CD4-positive, alpha-beta memory T cell (primary cell): ENCODE measurements at regions of chr14 and their contacts with region 1.

Region 1: GRCh38 chr14:54347997-54348611 is 48.7 kb upstream of the CDKN3 start:
- DNase-seq: peak in 4 of 5 donors; percentile 8 to 20 (median 10)
- H3K4me3 ChIP-seq: no peak overlapping the region
- H3K4me3 Mint-ChIP-seq: no peak overlapping the region
- H3K27ac ChIP-seq: no peak overlapping the region
- H3K27ac Mint-ChIP-seq: no peak overlapping the region
- H3K4me1 ChIP-seq: no peaks in the 10 kb centered on the region
- H3K4me1 Mint-ChIP-seq: peaks cover 0 to 5% (median 3%) of the 10 kb centered on the region in 4 donors
- H3K27me3 ChIP-seq: no peaks in the 10 kb centered on the region
- H3K27me3 Mint-ChIP-seq: peaks cover 7 to 15% of the 10 kb centered on the region in 2 donors

Region 2: DNA sequence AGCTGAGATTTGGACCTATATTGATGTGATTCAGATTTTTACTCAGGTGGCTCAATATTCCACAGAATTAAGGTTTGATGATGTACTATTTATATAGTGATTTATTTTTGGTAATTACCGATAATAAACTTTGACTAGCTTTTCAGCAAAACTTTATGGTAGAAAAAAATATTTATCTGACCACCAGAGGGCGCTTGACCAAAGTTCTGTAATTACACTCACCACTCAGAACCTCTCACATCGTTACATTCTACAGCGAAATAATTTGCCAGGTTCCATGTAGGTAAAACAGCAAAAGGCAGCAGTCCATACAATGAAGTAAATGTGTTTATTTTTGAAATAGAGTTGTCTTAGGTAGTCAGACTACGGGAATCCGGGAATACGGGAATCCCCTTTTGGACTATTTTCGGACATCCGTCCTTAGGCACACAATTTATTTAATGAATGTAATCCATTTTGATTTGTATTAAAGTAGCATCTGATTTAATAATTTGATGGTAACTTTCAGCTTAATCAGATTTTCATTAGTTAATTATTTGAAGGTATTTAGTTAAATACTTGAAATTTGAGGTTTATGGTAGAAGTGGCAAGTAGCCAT is 1052.0 kb before region 1 on chr14:
- CTCF ChIA-PET with region 1: interaction called, 10 read pairs
- POLR2A ChIA-PET with region 1: no interaction called
- intact Hi-C with region 1: no loop called
- DNase-seq: peak in 4 of 5 donors; percentile 35 to 39 (median 37)
- H3K4me3 ChIP-seq: no peak overlapping the region
- H3K4me3 Mint-ChIP-seq: no peak overlapping the region
- H3K27ac ChIP-seq: no peak overlapping the region
- H3K27ac Mint-ChIP-seq: no peak overlapping the region
- H3K4me1 ChIP-seq: no peaks in the 10 kb centered on the region
- H3K4me1 Mint-ChIP-seq: no peaks in the 10 kb centered on the region
- H3K27me3 ChIP-seq: no peaks in the 10 kb centered on the region
- H3K27me3 Mint-ChIP-seq: no peaks in the 10 kb centered on the region

Region 3: DNA sequence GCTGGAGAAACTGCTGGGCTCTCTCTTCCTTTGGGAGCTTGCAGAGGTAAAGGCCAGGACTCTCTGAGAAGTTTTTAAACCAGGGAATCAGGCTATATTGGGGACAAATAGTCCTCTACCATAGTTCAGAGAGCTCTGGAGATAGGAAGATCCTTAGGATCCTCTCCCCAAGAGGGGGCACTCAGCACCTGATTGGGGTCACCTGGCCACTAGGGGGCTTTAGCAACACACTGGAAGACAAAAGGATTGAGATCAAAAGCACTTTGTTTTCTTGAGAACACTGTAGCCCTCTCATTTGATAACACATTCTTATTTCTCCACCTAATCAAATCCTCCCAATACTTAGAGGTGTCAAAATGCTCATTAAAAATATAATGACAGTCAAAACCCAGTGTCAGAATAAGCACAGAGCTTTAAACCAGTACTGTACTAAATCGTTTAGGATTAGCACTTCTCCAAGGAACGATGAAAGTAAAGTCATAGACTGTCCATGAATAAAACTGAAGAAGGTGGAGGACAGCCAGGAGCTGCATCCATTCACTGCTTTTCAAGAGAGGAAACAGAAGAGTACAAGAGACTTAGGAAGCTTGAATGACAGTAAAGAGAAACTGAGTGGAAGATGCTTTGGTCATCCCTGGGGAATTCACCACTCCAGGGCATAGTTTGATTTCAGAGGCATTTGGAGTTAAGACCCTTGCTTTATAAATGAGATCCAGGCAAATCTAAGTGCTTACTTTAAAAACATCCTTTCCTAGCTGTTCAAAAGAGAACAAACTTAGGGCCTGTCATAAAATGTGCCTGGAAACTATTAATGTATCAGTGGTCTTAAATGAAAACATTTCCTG is 418.0 kb before region 1 on chr14:
- CTCF ChIA-PET with region 1: interaction called, 3 read pairs
- POLR2A ChIA-PET with region 1: no interaction called
- intact Hi-C with region 1: loop called (anchors 5 kb)
- DNase-seq: peak in 2 of 5 donors; percentile 8 to 12
- H3K4me3 ChIP-seq: no peak overlapping the region
- H3K4me3 Mint-ChIP-seq: no peak overlapping the region
- H3K27ac ChIP-seq: no peak overlapping the region
- H3K27ac Mint-ChIP-seq: no peak overlapping the region
- H3K4me1 ChIP-seq: no peaks in the 10 kb centered on the region
- H3K4me1 Mint-ChIP-seq: no peaks in the 10 kb centered on the region
- H3K27me3 ChIP-seq: no peaks in the 10 kb centered on the region
- H3K27me3 Mint-ChIP-seq: peaks cover 3 to 8% of the 10 kb centered on the region in 2 donors

Region 4: DNA sequence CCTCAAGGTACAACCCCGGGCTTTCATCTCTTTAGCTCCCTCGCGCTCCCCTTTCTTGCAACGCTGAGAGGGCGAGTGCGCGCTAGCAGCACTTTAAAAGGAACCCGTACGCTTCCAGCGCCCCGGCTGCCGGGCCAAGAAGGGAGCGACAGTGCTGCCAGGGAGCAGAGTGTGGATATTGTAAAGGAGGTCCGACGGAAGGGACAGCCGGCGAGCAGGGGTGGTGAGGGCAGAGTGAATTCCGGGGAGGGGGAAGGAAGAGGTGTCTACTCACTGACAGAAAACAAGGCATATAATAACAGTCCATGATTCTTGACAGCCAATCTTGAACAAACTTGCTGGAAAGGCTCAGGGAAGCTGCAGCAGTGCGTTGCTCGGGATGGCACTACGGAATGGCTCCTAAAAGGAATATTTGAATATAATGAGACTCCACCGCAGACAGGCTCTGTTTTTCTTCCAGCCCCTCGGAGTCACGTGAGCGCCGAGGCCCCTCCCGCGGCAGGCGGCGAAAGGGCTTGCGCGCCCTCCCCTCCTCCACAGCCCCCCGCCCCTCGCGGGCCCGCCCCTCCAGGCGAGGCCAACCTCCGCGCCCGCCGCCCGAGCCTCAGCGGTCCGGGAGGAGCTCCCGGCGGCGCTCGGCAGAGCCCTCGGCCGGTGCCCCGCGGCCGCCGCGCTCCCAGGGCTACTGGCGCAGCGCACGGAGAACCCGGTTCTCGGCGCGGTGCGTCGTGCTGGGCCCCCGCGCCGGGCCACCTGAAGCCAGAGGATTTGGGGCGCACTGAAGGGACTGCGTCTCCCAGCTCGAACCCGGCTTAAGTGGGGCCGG is 394.9 kb before region 1 on chr14:
- CTCF ChIA-PET with region 1: no interaction called
- POLR2A ChIA-PET with region 1: no interaction called
- intact Hi-C with region 1: no loop called
- DNase-seq: peak in 1 of 5 donors; percentile 14
- H3K4me3 ChIP-seq: peak overlapping the region in 1 of 2 donors; percentile 37
- H3K4me3 Mint-ChIP-seq: peak overlapping the region; percentile 77 to 90 (median 86)
- H3K27ac ChIP-seq: no peak overlapping the region
- H3K27ac Mint-ChIP-seq: no peak overlapping the region
- H3K4me1 ChIP-seq: peaks cover 33% of the 10 kb centered on the region
- H3K4me1 Mint-ChIP-seq: peaks cover 8 to 47% (median 23%) of the 10 kb centered on the region in 4 donors
- H3K27me3 ChIP-seq: peaks cover 8% of the 10 kb centered on the region
- H3K27me3 Mint-ChIP-seq: peaks cover 31 to 44% of the 10 kb centered on the region in 2 donors

Region 5: DNA sequence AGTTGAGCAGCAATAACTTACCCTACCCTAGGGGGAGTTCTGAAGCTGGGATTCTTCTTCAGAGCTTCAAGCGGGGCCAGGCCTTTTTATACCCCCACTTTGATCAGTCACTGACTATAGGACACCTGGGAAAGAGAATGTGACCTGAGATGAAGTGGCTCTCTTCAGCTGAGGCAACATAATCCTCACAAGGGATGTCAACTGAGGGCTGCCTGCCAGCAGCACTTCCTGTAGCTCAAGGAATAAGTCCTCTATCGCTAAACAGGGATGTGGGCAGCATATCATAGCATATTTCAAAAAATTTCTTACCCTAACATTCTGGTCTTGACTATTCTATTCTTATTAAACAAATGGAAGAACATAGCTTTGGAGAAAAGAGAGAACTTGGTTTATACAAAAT is 798.3 kb after region 1 on chr14:
- CTCF ChIA-PET with region 1: no interaction called
- POLR2A ChIA-PET with region 1: no interaction called
- intact Hi-C with region 1: no loop called
- DNase-seq: no peak
- H3K4me3 ChIP-seq: no peak overlapping the region
- H3K4me3 Mint-ChIP-seq: no peak overlapping the region
- H3K27ac ChIP-seq: no peak overlapping the region
- H3K27ac Mint-ChIP-seq: peak overlapping the region in 1 of 7 donors; percentile 75
- H3K4me1 ChIP-seq: peaks cover 5% of the 10 kb centered on the region
- H3K4me1 Mint-ChIP-seq: peaks cover 0 to 5% (median 0%) of the 10 kb centered on the region in 4 donors
- H3K27me3 ChIP-seq: no peaks in the 10 kb centered on the region
- H3K27me3 Mint-ChIP-seq: no peaks in the 10 kb centered on the region